ENCODE measurements at regions of chr18 and their contacts with region 1.

Region 1: DNA sequence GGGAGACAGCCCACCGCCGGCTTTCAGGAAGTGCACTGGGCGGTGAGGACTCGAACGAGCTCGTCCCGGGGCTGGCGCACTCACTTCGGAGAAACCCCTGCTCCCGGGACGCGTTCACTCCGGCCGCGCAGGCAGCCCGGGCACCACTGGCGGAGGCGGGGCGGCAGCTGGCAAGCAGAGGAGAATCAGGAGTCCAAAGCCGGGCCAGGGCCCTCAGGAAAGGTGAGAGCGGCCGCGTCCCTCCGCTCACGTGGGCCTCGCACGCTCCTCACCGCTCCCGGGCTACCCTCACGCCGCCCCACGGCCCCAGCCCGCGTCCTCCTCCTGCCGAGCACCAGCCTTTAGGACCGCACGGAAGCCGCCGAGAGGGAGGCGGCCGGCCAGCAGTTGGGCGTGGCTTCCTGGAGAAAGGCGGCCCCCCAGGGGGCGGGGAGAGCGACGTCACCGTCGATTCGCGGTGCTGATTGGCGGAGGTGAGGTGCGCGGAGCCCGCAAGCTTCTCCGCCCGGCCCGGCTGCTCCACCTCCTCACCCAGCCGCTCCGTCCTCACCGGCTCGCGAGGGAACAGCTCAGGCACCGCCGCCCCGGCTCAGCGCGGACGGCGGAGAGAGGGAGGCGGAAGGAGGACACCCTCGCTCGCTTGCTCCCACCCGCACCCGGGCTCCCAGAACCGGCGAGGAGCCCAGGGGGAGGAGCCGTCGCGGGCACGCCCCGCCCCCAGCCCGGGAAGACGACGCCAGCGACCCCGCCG is at the start of gene ZCCHC2:
- DNase-seq: peak; percentile 98 to 99
- ATAC-seq: peak; percentile 85 to 94 (median 93)
- H3K4me3 ChIP-seq: peak within 1 kb of the TSS; percentile 77 to 98 (median 92)
- H3K27ac ChIP-seq: peak within 1 kb of the TSS; percentile 96 to 100 (median 99)
- H3K4me1 ChIP-seq: peaks cover 0 to 37% (median 28%) of the 10 kb centered on the region in 9 donors
- H3K27me3 ChIP-seq: no peaks in the 10 kb centered on the region
- CTCF ChIP-seq: no peak
- total RNA-seq, gene ZCCHC2: 15.1 to 45.3 (median 20.1) TPM

Region 2: GRCh38 chr18:62287781-62288664 is 234.7 kb before region 1 on chr18:
- intact Hi-C with region 1: no loop called
- DNase-seq: no peak
- ATAC-seq: no peak
- H3K4me3 ChIP-seq: no peak overlapping the region
- H3K27ac ChIP-seq: peak overlapping the region in 1 of 10 donors; percentile 6
- H3K4me1 ChIP-seq: peaks cover 0 to 44% (median 6%) of the 10 kb centered on the region in 9 donors
- H3K27me3 ChIP-seq: no peaks in the 10 kb centered on the region
- CTCF ChIP-seq: no peak

Region 3: DNA sequence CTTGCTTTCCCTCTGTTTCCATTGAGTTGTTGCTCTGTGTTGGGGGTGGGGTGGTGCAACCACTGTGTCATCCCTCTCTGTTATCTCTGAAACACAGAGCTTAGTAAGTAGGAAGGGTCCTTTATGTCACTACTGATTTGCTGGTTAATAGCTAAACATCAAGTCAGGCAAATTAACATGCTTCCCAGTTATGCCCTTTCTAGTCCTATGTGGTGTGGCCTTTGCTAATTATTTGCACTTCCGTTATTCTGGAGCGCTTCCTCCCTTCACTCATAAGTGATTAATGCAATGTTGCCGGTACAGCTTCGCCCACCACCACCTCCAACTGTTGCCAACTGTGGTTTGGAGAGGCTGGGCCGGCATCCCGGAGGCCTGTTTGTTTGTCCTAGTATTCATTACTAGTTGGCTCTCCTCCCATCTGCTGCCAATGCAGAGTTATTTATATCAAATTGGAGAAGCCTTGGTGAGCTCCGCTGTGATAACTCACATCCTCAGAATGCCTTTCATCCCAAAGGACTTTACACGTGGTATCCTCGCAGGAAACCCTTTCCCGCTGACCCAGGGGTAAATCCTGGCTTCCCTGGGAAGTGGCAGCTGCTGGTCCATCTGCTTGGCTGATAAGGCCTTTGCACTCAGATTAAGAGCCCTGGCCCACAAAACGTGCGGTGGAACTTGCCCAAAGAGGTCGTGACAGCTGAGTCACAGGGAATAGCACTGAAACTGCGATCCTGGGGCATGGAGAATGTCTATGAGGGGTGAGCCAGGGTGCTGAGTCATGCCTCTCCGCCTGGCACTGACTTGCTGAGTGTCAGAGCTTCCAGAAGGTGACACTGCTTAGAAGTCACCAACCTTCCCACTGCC is 71.9 kb before region 1 on chr18:
- intact Hi-C with region 1: loop called in 2 of 10 experiments (anchors 5 to 10 kb)
- DNase-seq: peak; percentile 65 to 66
- ATAC-seq: peak; percentile 79 to 98 (median 94)
- H3K4me3 ChIP-seq: no peak overlapping the region
- H3K27ac ChIP-seq: peak overlapping the region in 9 of 10 donors; percentile 38 to 83 (median 69)
- H3K4me1 ChIP-seq: peaks cover 0 to 41% (median 14%) of the 10 kb centered on the region in 9 donors
- H3K27me3 ChIP-seq: no peaks in the 10 kb centered on the region
- CTCF ChIP-seq: peak in 1 of 9 donors; percentile 4

Region 4: DNA sequence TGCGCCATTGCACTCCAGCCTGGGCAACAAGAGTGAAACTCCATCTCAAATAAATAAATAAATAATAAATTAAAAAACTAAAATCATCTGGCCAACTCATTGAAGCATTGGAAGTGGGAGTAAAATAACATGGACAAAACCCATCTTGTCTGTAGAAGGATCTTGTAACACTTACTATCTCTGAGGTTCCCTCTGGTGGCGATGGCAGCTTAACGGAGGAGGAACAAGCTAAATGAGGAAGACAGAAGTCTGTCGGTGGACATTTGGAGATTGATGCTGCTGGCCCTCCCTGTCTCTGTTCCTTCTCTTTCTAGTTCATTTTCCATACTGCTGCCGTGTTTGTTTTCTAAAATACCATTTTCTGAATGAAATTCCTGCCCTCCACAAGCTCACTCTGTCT is 43.5 kb after region 1 on chr18:
- intact Hi-C with region 1: no loop called
- DNase-seq: peak in 1 of 2 donors; percentile 37
- ATAC-seq: peak in 2 of 8 donors; percentile 56 to 57
- H3K4me3 ChIP-seq: no peak overlapping the region
- H3K27ac ChIP-seq: no peak overlapping the region
- H3K4me1 ChIP-seq: no peaks in the 10 kb centered on the region
- H3K27me3 ChIP-seq: no peaks in the 10 kb centered on the region
- CTCF ChIP-seq: peak in 7 of 9 donors; percentile 29 to 51 (median 49)